Spleen (tissue), 13 donors: ENCODE measurements at regions of chr2 and their contacts with region 1.

Region 1: GRCh38 chr2:165401285-165401852 is 68.1 kb upstream of the CSRNP3 start:
- DNase-seq: no peak
- H3K4me3 ChIP-seq: no peak overlapping the region
- H3K27ac ChIP-seq: no peak overlapping the region
- H3K4me1 ChIP-seq: peaks cover 0 to 4% (median 0%) of the 10 kb centered on the region in 6 donors
- H3K27me3 ChIP-seq: no peaks in the 10 kb centered on the region
- CTCF ChIP-seq: peak; percentile 34 to 72 (median 56)
- POLR2A ChIP-seq: no peak

Region 2: GRCh38 chr2:165698444-165698894 is 297.1 kb after region 1 on chr2:
- intact Hi-C with region 1: loop called (anchors 10 kb)
- DNase-seq: no peak
- H3K4me3 ChIP-seq: no peak overlapping the region
- H3K27ac ChIP-seq: no peak overlapping the region
- H3K4me1 ChIP-seq: peaks cover 0 to 5% (median 0%) of the 10 kb centered on the region in 6 donors
- H3K27me3 ChIP-seq: no peaks in the 10 kb centered on the region
- CTCF ChIP-seq: peak in 6 of 11 experiments; percentile 22 to 42 (median 40)
- POLR2A ChIP-seq: no peak